ENCODE measurements at regions of chr1 and their contacts with region 1.

Region 1: GRCh38 chr1:224459966-224460365 is 25.4 kb upstream of the WDR26 start:
- DNase-seq: no peak
- ATAC-seq: no peak
- H3K4me3 ChIP-seq: no peak overlapping the region
- H3K27ac ChIP-seq: peak overlapping the region in 1 of 4 donors; percentile 35
- H3K4me1 ChIP-seq: peaks cover 16 to 26% of the 10 kb centered on the region in 2 donors
- H3K27me3 ChIP-seq: no peaks in the 10 kb centered on the region
- CTCF ChIP-seq: no peak
- POLR2A ChIP-seq: no peak

Region 2: DNA sequence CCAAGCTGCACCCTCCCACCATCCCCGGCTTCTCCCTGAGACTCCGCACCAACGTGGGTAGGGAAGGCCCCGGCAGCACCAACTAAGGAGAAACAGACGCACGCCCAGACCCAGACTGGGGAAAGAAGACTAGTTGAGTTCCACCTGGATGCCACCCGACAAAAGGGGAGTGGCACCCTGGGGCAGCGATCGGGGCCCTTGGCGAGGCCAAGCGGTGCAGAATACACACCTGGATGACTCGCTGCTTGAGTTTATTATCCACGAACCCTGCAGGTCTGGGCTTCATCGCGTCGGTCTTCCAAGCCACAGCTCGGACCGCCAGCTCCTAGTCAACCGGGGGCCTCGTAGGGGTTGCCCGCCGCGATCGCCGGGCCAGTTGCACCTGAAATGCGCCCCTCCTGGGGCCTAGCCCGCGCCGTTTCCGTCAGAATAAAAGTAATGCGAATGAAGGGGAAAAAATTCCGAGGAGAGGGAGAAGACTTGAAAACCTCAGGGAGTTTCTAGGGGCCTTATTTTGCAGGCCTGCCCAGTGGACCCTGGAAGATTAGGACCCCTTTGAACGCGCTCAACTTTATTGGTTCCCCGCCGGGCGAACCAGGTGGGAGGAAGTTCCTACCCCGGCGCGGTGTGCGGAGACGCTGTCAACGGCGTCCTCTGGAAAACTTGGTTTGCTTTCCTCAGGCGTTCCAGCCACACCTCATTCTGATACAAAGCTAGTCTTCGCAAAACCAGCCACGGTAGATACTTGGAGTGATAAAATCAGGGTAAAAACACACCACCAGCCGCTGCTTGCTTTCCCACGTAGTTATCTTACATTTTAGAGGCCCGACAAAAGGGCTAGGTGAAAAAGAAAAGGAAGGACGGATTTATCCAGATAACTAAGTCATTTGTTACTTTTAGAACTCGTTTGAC is 129.9 kb before region 1 on chr1 and contains the start of gene NVL:
- in situ Hi-C with region 1: loop called in 3 of 4 experiments (anchors 10 to 25 kb)
- intact Hi-C with region 1: loop called (anchors 1 kb)
- DNase-seq: peak; percentile 78 to 82
- ATAC-seq: peak; percentile 96 to 97
- H3K4me3 ChIP-seq: peak within 1 kb of the TSS; percentile 87 to 96 (median 89)
- H3K27ac ChIP-seq: peak within 1 kb of the TSS; percentile 87 to 95 (median 91)
- H3K4me1 ChIP-seq: peaks cover 17 to 19% of the 10 kb centered on the region in 2 donors
- H3K27me3 ChIP-seq: no peaks in the 10 kb centered on the region
- CTCF ChIP-seq: no peak
- POLR2A ChIP-seq: peak; percentile 50 to 53
- total RNA-seq, gene NVL: 6.5 to 32.5 (median 7.7) TPM

Measured in gastrocnemius medialis (tissue), 4 donors.